ENCODE measurements at regions of chr5 and their contacts with region 1.

Region 1: DNA sequence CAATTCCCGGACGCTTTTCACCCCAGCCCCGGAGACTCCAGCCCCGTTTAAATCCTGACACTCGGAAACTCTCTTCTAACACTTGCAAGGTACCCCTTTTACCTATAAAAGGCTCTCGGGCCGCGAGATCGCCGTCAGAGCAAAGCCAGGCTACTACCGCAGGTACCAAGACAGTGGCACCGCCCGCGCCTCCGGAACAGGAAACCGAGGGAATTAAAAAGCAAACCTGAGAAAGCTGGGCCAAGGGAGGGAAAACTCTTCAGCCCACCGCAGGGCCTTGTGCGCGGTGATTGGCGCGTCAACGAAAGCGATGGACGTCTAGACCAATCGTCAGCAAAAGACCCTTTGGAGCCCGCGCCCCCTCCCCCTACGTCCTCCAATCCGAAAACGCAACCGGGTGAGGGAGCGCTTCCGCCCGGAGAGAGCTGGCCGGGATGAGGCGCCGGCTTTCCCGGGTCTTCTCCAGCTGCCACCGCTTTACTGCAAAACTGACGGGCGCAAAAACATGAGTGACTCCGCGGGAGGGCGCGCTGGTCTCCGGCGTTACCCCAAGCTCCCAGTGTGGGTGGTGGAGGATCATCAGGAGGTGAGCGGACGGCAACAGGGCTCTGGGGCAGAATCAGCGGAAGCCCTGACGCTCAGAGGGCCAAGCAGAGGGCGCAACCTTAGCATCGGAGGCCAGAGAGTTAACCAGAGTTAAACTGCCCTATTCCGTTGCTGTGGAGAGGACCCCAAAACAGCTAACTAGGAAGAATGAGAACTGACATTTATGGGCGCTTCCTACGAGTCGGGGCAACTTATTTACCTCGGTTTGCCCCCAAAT is at the starts of genes C5orf22 and DROSHA:
- DNase-seq: peak; percentile 89
- H3K4me3 Mint-ChIP-seq: peak within 1 kb of the TSS; percentile 94
- H3K27ac Mint-ChIP-seq: peak within 1 kb of the TSS; percentile 90
- H3K4me1 Mint-ChIP-seq: peaks cover 38% of the 10 kb centered on the region
- H3K27me3 Mint-ChIP-seq: no peaks in the 10 kb centered on the region
- total RNA-seq, gene C5orf22: 34.3 and 37.6 TPM in 2 replicates
- total RNA-seq, gene DROSHA: 98.1 and 101 TPM in 2 replicates

Region 2: GRCh38 chr5:31638748-31639418 is 106.8 kb after region 1 on chr5 and contains the start of gene PDZD2:
- intact Hi-C with region 1: loop called (anchors 5 kb)
- DNase-seq: peak; percentile 51
- H3K4me3 Mint-ChIP-seq: peak within 1 kb of the TSS; percentile 84
- H3K27ac Mint-ChIP-seq: peak within 1 kb of the TSS; percentile 26
- H3K4me1 Mint-ChIP-seq: peaks cover 6% of the 10 kb centered on the region
- H3K27me3 Mint-ChIP-seq: peaks cover 23% of the 10 kb centered on the region
- total RNA-seq, gene PDZD2: 0.05 and 0.25 TPM in 2 replicates